Heart right ventricle (tissue), 16 donors: ENCODE measurements at regions of chr15 and their contacts with region 1.

Region 1: GRCh38 chr15:24961967-24962366 is 7.2 kb downstream of the SNRPN start:
- DNase-seq: no peak
- ATAC-seq: peak in 1 of 8 donors; percentile 47
- H3K4me3 ChIP-seq: no peak overlapping the region
- H3K27ac ChIP-seq: no peak overlapping the region
- H3K4me1 ChIP-seq: peaks cover 0 to 6% (median 0%) of the 10 kb centered on the region in 9 donors
- H3K27me3 ChIP-seq: no peaks in the 10 kb centered on the region
- CTCF ChIP-seq: no peak

Region 2: GRCh38 chr15:25022233-25022632 is 60.3 kb after region 1 on chr15:
- intact Hi-C with region 1: loop called in 1 of 10 experiments (anchors 2 kb)
- DNase-seq: no peak
- ATAC-seq: peak in 4 of 8 donors; percentile 15 to 65 (median 54)
- H3K4me3 ChIP-seq: no peak overlapping the region
- H3K27ac ChIP-seq: no peak overlapping the region
- H3K4me1 ChIP-seq: no peaks in the 10 kb centered on the region
- H3K27me3 ChIP-seq: no peaks in the 10 kb centered on the region
- CTCF ChIP-seq: no peak

Region 3: GRCh38 chr15:25068696-25069095 is 106.7 kb after region 1 on chr15:
- intact Hi-C with region 1: no loop called
- DNase-seq: no peak
- ATAC-seq: no peak
- H3K4me3 ChIP-seq: no peak overlapping the region
- H3K27ac ChIP-seq: no peak overlapping the region
- H3K4me1 ChIP-seq: no peaks in the 10 kb centered on the region
- H3K27me3 ChIP-seq: no peaks in the 10 kb centered on the region
- CTCF ChIP-seq: no peak

Region 4: GRCh38 chr15:25372298-25372697 is 410.3 kb after region 1 on chr15:
- intact Hi-C with region 1: no loop called
- DNase-seq: no peak
- ATAC-seq: peak in 1 of 8 donors; percentile 64
- H3K4me3 ChIP-seq: no peak overlapping the region
- H3K27ac ChIP-seq: no peak overlapping the region
- H3K4me1 ChIP-seq: peaks cover 0 to 29% (median 14%) of the 10 kb centered on the region in 9 donors
- H3K27me3 ChIP-seq: no peaks in the 10 kb centered on the region
- CTCF ChIP-seq: no peak